ENCODE measurements at regions of chr1 and their contacts with region 1.

Region 1: DNA sequence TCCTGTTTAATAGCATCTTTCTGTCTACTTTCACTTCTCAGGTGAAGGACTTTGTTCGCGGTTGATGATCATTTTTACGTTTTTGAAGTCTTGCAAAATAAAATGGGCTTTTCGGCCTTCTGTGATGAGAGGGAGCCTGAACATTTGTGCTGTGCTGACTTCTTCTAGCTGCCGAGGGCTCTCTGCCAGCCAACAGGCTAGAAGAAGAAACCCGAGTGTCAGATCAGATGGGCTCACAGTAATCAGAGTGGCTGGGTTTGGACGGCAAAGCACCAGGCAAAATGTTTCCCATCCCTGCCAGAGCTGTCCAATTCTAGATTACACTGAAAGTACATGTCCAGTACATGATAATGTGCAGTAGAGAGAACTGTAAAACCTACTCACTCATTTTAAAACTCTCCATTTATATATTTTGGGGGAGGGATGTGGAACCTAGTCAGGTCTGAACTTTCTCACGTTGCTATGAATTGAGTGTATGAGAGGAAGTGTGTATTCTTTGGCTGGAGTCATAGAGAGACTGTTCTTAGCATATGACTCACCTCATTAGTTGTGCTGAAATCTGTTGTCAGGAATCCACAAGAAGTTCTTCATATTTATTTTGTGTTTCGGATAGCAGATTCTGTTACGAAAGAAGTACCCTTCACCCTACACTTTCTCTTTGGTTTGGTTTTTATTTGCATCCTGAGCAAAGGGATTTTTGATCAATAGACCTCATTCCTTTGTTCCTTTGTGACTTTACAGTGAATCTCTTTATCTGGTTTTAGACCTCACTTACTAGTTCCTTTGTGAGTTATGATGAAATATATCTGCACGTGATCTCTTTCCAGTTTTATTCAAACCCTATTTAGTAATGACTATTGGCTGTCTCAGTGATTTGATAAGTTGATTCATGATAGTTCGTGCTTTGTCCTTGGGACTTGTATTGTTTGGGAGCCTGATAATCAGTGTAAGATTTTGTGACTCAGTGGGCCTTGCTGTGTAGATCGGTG is 4.8 kb downstream of the ATP1A1 start:
- DNase-seq: peak in 8 of 10 donors; percentile 15 to 69 (median 52)
- ATAC-seq: peak; percentile 48 to 60
- H3K4me3 Mint-ChIP-seq: peak overlapping the region; percentile 82 to 99 (median 96)
- H3K27ac Mint-ChIP-seq: peak overlapping the region; percentile 92 to 99 (median 98)
- H3K4me1 Mint-ChIP-seq: peaks cover 44 to 88% (median 83%) of the 10 kb centered on the region in 4 donors
- H3K27me3 Mint-ChIP-seq: no peaks in the 10 kb centered on the region

Region 2: DNA sequence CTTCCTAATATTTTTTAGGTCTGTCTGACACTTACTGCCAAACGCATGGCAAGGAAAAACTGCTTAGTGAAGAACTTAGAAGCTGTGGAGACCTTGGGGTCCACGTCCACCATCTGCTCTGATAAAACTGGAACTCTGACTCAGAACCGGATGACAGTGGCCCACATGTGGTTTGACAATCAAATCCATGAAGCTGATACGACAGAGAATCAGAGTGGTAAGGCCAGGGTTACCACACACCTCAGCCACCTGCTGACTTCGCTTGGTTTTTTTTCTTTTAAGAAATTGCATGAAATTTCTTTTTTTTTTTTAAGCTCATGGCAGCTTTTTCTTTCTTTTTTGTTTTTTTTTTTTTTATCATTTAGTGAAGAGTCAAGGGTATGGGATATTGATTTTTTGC is 12.4 kb after region 1 on chr1:
- POLR2A ChIA-PET with region 1: interaction called, 14 read pairs
- DNase-seq: peak in 1 of 10 donors; percentile 19
- ATAC-seq: peak; percentile 43 to 49
- H3K4me3 Mint-ChIP-seq: no peak overlapping the region
- H3K27ac Mint-ChIP-seq: peak overlapping the region in 8 of 10 donors; percentile 20 to 80 (median 62)
- H3K4me1 Mint-ChIP-seq: peaks cover 18 to 63% (median 45%) of the 10 kb centered on the region in 4 donors
- H3K27me3 Mint-ChIP-seq: no peaks in the 10 kb centered on the region

Region 3: DNA sequence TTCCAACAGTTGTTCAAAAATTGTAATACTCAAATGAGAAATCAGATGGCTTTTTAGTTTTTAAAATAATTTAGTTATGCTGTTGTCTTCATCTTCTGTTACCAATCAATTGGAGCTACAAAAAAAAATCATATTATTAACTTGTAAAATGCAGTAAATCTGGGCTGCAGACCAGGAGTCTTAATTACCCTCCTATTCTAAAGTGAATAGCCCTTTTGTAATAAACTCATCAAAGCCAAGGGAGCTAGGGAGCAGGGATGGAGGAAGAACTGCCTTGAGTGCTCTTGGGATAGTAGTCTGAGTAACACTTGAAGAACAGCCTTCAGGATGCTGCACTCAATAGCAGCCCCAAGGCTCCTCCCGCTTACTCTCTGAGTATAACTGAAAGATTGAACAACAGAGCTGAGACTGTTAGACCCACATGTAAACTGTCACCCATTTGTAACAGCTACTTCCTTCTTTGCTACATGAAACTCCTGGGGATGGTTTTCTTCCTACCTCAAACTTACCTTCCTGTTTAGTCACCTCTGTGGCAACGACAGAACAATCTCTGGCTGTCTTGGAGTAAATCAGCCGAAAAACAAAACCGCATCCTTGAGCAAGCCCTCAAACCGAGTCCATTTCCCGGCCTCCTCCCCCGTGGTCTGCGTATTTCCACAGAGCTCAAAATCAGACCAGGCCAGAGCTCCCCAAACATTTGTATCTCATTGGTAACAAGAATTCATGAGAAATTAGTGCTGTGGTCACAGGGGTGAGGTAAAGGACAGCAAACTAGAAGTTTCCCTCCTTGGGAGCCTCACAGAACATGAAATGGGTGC is 137.1 kb after region 1 on chr1:
- POLR2A ChIA-PET with region 1: no interaction called
- DNase-seq: peak in 8 of 10 donors; percentile 9 to 65 (median 37)
- ATAC-seq: peak; percentile 77 to 83
- H3K4me3 Mint-ChIP-seq: peak overlapping the region; percentile 36 to 82 (median 74)
- H3K27ac Mint-ChIP-seq: peak overlapping the region; percentile 87 to 98 (median 94)
- H3K4me1 Mint-ChIP-seq: peaks cover 40 to 61% (median 45%) of the 10 kb centered on the region in 4 donors
- H3K27me3 Mint-ChIP-seq: no peaks in the 10 kb centered on the region

Measured in naive thymus-derived CD8-positive, alpha-beta T cell (primary cell).